H1 (cell line): ENCODE measurements at regions of chr1 and their contacts with region 1.

Region 1: GRCh38 chr1:1890506-1891348 is at the start of gene GNB1:
- DNase-seq: peak; percentile 53 to 90
- H3K4me3 ChIP-seq: peak within 1 kb of the TSS; percentile 76 to 98 (median 89)
- H3K27ac ChIP-seq: peak within 1 kb of the TSS; percentile 55; the same call in 1 of the 2 replicates
- H3K4me1 ChIP-seq: peaks cover 0 to 22% (median 16%) of the 10 kb centered on the region in 4 experiments; a peak in 6 of 7 replicates
- H3K27me3 ChIP-seq: no peaks in the 10 kb centered on the region; a peak in 3 of 7 replicates
- CTCF ChIP-seq: no peak
- EP300 ChIP-seq: peak in 1 of 2 experiments; percentile 36; a peak in 1 of 3 replicates
- POLR2A ChIP-seq: no peak
- RAD21 ChIP-seq: no peak
- total RNA-seq, gene GNB1: 382 and 394 TPM in 2 replicates

Region 2: GRCh38 chr1:1777950-1778662 is 112.6 kb before region 1 on chr1 and contains the start of gene NADK:
- CTCF ChIA-PET with region 1: interaction called, 6 read pairs
- POLR2A ChIA-PET with region 1: interaction called, 17 read pairs
- DNase-seq: peak in 1 of 2 experiments; percentile 79
- H3K4me3 ChIP-seq: peak within 1 kb of the TSS; percentile 66 to 91 (median 77)
- H3K27ac ChIP-seq: peak within 1 kb of the TSS; percentile 76
- H3K4me1 ChIP-seq: peaks cover 3 to 44% (median 28%) of the 10 kb centered on the region in 4 experiments
- H3K27me3 ChIP-seq: no peaks in the 10 kb centered on the region
- CTCF ChIP-seq: no peak
- EP300 ChIP-seq: no peak
- POLR2A ChIP-seq: no peak
- RAD21 ChIP-seq: no peak
- total RNA-seq, gene NADK: 80.1 and 89.7 TPM in 2 replicates

Region 3: GRCh38 chr1:1858382-1859086 is 32.2 kb before region 1 on chr1:
- CTCF ChIA-PET with region 1: interaction called, 5 read pairs
- POLR2A ChIA-PET with region 1: interaction called, 19 read pairs
- DNase-seq: no peak
- H3K4me3 ChIP-seq: no peak overlapping the region
- H3K27ac ChIP-seq: no peak overlapping the region
- H3K4me1 ChIP-seq: peaks cover 0 to 8% (median 4%) of the 10 kb centered on the region in 4 experiments; a peak in 3 of 7 replicates
- H3K27me3 ChIP-seq: no peaks in the 10 kb centered on the region
- CTCF ChIP-seq: peak; percentile 18 to 52 (median 50); a peak in 3 of 4 replicates
- EP300 ChIP-seq: no peak
- POLR2A ChIP-seq: no peak
- RAD21 ChIP-seq: peak; percentile 17 to 42; a peak in 2 of 4 replicates